Activated CD4-positive, alpha-beta T cell treated with anti-CD3 and anti-CD28 coated beads for 36 hours (primary cell): ENCODE measurements at regions of chr1 and their contacts with region 1.

Region 1: DNA sequence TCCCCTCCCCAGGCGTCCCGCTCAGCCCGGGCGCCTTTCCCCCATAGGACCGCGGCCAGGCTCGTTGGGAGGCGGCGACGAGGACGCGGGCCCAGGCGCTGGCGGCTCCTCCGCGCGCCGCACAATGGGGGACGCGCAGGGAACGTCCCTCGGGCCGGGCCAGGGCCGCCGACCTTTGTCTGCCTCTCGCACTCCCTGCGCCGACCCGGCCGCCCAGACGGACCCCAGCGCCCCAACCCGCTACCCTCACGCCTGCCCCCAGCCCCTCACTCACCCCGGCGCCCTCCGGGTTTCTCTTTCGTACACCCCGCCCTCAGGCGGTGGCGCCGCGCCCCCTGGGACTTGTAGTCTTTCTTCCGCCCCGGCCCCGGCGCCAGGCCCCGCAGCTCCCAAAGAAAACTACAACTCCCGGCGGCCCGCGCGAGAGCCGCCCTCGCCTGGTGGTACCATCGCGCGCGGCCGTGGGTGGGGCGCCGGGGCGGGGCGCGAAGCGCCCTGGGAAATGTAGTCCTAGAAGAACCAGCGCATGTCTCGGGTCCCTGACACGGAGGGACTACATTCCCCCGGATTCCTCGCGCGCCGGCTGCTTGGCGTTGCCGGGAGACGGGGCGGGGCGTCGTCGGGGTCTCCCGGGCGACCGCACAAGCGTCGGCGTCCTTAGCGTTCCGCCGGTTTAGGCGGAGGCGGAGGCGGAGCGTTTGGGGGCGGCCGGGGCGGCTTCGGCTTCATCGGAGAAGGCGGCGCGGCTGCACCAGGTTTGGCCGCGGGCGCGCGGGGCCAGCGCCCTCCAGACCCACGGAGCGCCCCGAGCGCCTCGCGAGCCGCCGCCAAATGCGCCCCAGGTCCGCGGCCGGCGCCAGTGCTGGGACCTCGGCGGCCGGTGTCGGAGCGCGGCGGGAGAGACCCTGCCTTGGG is at the start of gene C1orf159:
- DNase-seq: peak; percentile 99
- ATAC-seq: peak; percentile 96
- H3K4me3 Mint-ChIP-seq: peak within 1 kb of the TSS; percentile 76
- H3K27ac Mint-ChIP-seq: peak within 1 kb of the TSS; percentile 25
- H3K4me1 Mint-ChIP-seq: peaks cover 11% of the 10 kb centered on the region
- H3K27me3 Mint-ChIP-seq: peaks cover 3% of the 10 kb centered on the region
- total RNA-seq, gene C1orf159: 11.3 to 13.5 TPM

Region 2: GRCh38 chr1:921011-921837 is 194.8 kb before region 1 on chr1:
- CTCF ChIA-PET with region 1: no interaction called
- POLR2A ChIA-PET with region 1: no interaction called
- intact Hi-C with region 1: no loop called
- DNase-seq: peak; percentile 52
- ATAC-seq: peak; percentile 42
- H3K4me3 Mint-ChIP-seq: no peak overlapping the region
- H3K27ac Mint-ChIP-seq: no peak overlapping the region
- H3K4me1 Mint-ChIP-seq: peaks cover 12% of the 10 kb centered on the region
- H3K27me3 Mint-ChIP-seq: peaks cover 42% of the 10 kb centered on the region

Region 3: GRCh38 chr1:1040004-1040991 is 75.7 kb before region 1 on chr1:
- CTCF ChIA-PET with region 1: no interaction called
- POLR2A ChIA-PET with region 1: no interaction called
- intact Hi-C with region 1: loop called in 1 of 2 experiments (anchors 1 kb)
- DNase-seq: peak; percentile 93
- ATAC-seq: peak; percentile 87
- H3K4me3 Mint-ChIP-seq: peak overlapping the region; percentile 35
- H3K27ac Mint-ChIP-seq: no peak overlapping the region
- H3K4me1 Mint-ChIP-seq: peaks cover 15% of the 10 kb centered on the region
- H3K27me3 Mint-ChIP-seq: peaks cover 22% of the 10 kb centered on the region

Region 4: GRCh38 chr1:1200851-1201810 is 85.1 kb after region 1 on chr1:
- CTCF ChIA-PET with region 1: no interaction called
- POLR2A ChIA-PET with region 1: no interaction called
- intact Hi-C with region 1: loop called in 1 of 2 experiments (anchors 1 kb)
- DNase-seq: peak; percentile 94
- ATAC-seq: peak; percentile 78
- H3K4me3 Mint-ChIP-seq: peak overlapping the region; percentile 69
- H3K27ac Mint-ChIP-seq: peak overlapping the region; percentile 85
- H3K4me1 Mint-ChIP-seq: peaks cover 12% of the 10 kb centered on the region
- H3K27me3 Mint-ChIP-seq: no peaks in the 10 kb centered on the region

Region 5: GRCh38 chr1:1307908-1308755 is 192.1 kb after region 1 on chr1 and contains the starts of genes ACAP3 and PUSL1:
- CTCF ChIA-PET with region 1: no interaction called
- POLR2A ChIA-PET with region 1: no interaction called
- intact Hi-C with region 1: loop called in 1 of 2 experiments (anchors 1 kb)
- DNase-seq: peak; percentile 94
- ATAC-seq: peak; percentile 73
- H3K4me3 Mint-ChIP-seq: peak within 1 kb of the TSS; percentile 80
- H3K27ac Mint-ChIP-seq: peak within 1 kb of the TSS; percentile 84
- H3K4me1 Mint-ChIP-seq: peaks cover 23% of the 10 kb centered on the region
- H3K27me3 Mint-ChIP-seq: no peaks in the 10 kb centered on the region
- total RNA-seq, gene ACAP3: 17.5 to 24.3 TPM
- total RNA-seq, gene PUSL1: 13.7 to 18.0 TPM

Region 6: GRCh38 chr1:1399187-1399871 is 283.3 kb after region 1 on chr1 and contains the start of gene CCNL2:
- CTCF ChIA-PET with region 1: no interaction called
- POLR2A ChIA-PET with region 1: no interaction called
- intact Hi-C with region 1: loop called in 1 of 2 experiments (anchors 1 kb)
- DNase-seq: peak; percentile 100
- ATAC-seq: peak; percentile 97
- H3K4me3 Mint-ChIP-seq: peak within 1 kb of the TSS; percentile 93
- H3K27ac Mint-ChIP-seq: peak within 1 kb of the TSS; percentile 91
- H3K4me1 Mint-ChIP-seq: peaks cover 52% of the 10 kb centered on the region
- H3K27me3 Mint-ChIP-seq: no peaks in the 10 kb centered on the region
- total RNA-seq, gene CCNL2: 73.6 to 89.7 TPM

Region 7: GRCh38 chr1:1489231-1489630 is 373.2 kb after region 1 on chr1:
- CTCF ChIA-PET with region 1: no interaction called
- POLR2A ChIA-PET with region 1: no interaction called
- intact Hi-C with region 1: no loop called
- DNase-seq: no peak
- ATAC-seq: no peak
- H3K4me3 Mint-ChIP-seq: no peak overlapping the region
- H3K27ac Mint-ChIP-seq: no peak overlapping the region
- H3K4me1 Mint-ChIP-seq: no peaks in the 10 kb centered on the region
- H3K27me3 Mint-ChIP-seq: no peaks in the 10 kb centered on the region

Region 8: DNA sequence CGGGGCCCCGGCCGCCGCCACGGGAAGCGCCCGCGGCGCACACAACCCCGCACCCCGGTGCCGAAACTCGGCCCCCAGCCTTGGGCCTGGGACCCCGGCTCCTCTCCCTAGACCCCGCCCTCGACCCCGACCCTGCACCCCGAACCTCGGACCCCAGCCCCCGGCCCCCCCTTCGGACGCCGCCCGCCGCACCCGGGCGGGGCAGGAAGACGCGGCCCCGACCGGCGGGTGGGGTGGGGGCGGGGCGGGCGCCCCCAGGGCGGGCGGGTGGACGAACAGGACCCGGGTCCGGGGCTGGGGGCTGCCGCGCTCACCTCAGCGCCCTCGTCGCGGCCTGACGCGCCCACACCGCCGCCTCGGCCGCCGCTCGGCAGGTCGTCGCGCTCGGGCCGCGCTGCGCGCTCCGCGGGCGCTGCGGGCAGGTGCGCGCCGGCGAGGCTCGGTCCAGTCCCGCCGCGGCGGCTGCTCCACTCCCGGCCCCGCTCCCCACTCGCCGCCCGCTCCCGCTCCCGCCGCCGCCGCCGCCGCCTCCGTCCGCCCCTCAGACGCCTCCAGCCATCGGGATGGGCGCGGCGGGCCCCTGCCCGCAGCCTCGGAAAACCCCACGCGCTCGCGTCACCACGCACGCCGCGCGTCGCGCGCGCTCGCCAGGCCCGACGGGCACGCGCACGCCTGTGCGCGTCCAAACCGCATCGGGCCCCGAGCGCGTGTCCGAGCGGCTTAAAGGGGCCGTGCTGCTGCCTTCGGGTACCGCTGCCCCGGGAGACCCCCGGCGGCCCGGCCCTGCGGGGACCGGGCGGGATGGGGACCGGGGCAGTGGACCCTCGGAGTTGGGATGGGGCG is 774.7 kb after region 1 on chr1 and contains the start of gene GNB1:
- CTCF ChIA-PET with region 1: no interaction called
- POLR2A ChIA-PET with region 1: no interaction called
- intact Hi-C with region 1: loop called in 1 of 2 experiments (anchors 1 kb)
- DNase-seq: peak; percentile 91
- ATAC-seq: peak; percentile 47
- H3K4me3 Mint-ChIP-seq: peak within 1 kb of the TSS; percentile 88
- H3K27ac Mint-ChIP-seq: peak within 1 kb of the TSS; percentile 84
- H3K4me1 Mint-ChIP-seq: peaks cover 54% of the 10 kb centered on the region
- H3K27me3 Mint-ChIP-seq: no peaks in the 10 kb centered on the region
- total RNA-seq, gene GNB1: 347 to 669 TPM